Posterior vena cava (tissue), 2 donors: ENCODE measurements at regions of chr2 and their contacts with region 1.

Region 1: DNA sequence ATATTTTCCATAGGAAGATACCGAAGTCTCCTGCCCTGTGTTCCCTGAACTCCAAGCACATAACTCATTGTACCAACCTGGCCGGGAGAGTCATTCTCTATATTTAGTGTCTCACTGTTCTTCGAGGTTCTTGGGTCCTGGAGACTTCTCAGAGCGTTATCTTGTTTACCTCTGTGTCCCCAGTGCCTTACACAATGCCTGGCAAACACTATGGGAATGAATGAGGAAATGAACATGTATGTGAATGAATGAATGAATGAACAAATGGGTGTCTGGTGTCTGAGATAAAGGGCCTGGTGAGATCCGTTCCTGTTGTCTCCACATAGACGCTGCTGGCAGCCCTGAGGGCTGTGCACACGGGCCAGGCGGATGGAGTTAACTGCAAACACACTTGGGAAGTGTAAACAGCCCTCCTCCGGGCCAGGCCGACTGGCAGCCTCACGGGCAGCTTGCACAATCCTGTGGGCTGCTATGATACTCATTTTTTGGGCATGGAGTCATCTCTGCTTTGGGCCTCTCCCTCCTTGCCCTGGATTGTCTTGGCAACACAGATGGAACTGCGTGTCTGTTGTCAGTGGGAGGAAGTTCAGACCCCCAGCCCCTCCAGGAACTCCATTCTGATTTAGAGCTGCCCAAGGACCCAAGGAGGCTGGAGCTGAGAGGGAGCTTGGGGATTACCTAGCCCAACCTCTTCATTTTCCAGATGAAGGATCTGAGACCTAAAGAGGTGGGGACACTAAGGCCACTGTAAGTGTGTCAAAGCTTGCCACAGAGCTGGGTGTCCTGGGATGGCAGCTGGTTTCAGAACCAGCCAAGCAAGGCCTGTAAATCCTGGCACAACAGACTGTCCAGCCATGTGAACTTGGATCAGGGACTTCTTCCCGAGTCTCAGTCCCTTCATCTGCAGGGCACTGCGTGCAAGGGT is 124.4 kb downstream of the INHBB start:
- DNase-seq: peak; percentile 94

Region 2: GRCh38 chr2:121740973-121741372 is 1270.7 kb after region 1 on chr2:
- intact Hi-C with region 1: loop called in 1 of 2 experiments (anchors 5 kb)
- DNase-seq: peak; percentile 56